ENCODE measurements at regions of chr17 and their contacts with region 1.

Region 1: DNA sequence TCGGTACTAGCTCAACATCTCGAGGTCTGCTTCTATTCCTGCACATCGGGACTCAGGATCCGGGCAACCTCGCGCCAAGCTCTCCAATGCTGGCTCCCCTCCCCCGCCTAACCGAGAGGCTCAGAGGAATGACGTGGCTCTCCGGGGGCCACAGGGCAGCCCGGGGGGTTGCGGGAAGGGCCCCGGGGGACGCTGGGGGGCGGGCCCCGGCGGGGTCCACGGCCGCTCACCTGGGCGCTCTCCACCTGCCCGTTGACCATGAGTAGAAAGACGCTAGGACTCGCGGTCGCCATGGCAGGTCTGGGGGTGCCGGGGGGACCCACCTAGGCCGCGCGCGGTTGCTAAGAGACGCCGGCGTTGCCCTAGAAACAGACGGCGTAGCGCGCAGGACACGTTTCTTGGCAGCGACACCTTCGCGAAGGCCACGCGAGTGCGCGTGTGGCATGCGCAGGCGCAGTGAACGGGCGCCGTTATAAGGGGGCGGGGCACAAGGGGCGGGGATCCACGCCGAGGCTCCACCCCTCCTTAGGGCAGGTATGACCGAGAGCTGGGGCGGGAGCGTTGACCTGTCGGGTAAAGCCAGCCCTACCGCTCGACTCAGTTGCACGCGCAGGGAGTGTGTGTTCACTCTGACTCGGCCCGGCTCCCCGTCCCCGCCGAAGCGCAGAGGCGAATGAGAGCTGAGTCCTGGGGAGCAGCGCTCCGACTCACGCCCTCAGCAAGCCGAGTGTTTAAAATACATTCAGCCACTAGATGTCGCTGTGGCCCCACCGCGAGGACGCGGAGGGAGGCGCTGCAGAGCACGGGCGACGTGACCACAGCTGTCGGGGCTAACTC is at the start of gene B9D1:
- DNase-seq: peak; percentile 83 to 93
- H3K4me3 ChIP-seq: peak within 1 kb of the TSS; percentile 86
- H3K27ac ChIP-seq: peak within 1 kb of the TSS; percentile 85
- H3K4me1 ChIP-seq: peaks cover 13% of the 10 kb centered on the region
- H3K27me3 ChIP-seq: no peaks in the 10 kb centered on the region
- CTCF ChIP-seq: peak; percentile 97
- total RNA-seq, gene B9D1: 40.2 and 58.7 TPM in 2 replicates

Region 2: DNA sequence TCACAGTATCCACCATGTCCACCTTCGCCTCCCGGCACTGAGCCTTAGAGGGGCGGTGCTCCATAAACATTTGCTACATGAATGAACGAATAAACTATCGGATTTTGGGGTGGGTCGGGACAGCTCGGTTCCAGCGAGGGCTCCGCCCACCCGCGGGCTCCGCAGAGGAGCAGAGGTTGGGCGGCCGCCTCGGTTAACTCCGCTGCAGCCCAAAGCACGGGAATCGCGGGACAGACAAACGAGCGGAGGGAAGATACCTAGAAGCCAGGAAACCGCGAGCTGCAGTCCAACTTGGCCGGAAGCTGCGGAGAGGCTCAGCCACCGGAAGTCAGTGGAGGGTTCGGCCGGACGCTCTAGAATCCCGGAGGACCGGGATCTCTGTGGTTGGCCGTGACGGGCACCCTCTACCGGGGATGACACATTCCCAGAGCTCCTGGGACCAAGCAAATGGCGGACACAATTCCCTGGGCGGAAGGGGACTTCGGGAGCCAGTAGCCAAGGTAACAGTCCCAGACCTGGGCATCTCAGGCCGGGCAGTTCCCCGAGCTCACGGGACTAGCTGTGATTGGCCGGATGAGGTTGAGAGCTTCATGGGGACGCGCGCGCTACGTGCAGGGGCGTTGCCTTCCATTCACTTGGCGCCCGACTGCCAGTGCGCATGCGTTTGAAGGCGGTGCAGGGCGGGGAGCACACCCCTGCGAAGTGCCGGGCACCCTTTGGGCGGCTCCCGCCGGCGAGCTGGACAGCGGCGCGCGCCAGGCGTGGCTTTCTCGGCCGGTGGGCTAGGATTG is 15.3 kb after region 1 on chr17:
- CTCF ChIA-PET with region 1: interaction called, 27 read pairs
- POLR2A ChIA-PET with region 1: interaction called, 19 read pairs
- intact Hi-C with region 1: no loop called
- DNase-seq: peak; percentile 97 to 100
- H3K4me3 ChIP-seq: peak overlapping the region; percentile 79
- H3K27ac ChIP-seq: peak overlapping the region; percentile 79
- H3K4me1 ChIP-seq: peaks cover 19% of the 10 kb centered on the region
- H3K27me3 ChIP-seq: no peaks in the 10 kb centered on the region
- CTCF ChIP-seq: 0 out of 2 replicates have a peak, but pooled peaks have one; percentile 21

Region 3: GRCh38 chr17:19460700-19461099 is 98.2 kb after region 1 on chr17:
- CTCF ChIA-PET with region 1: no interaction called
- POLR2A ChIA-PET with region 1: no interaction called
- intact Hi-C with region 1: no loop called
- DNase-seq: no peak
- H3K4me3 ChIP-seq: no peak overlapping the region
- H3K27ac ChIP-seq: no peak overlapping the region
- H3K4me1 ChIP-seq: no peaks in the 10 kb centered on the region
- H3K27me3 ChIP-seq: no peaks in the 10 kb centered on the region
- CTCF ChIP-seq: no peak

Region 4: DNA sequence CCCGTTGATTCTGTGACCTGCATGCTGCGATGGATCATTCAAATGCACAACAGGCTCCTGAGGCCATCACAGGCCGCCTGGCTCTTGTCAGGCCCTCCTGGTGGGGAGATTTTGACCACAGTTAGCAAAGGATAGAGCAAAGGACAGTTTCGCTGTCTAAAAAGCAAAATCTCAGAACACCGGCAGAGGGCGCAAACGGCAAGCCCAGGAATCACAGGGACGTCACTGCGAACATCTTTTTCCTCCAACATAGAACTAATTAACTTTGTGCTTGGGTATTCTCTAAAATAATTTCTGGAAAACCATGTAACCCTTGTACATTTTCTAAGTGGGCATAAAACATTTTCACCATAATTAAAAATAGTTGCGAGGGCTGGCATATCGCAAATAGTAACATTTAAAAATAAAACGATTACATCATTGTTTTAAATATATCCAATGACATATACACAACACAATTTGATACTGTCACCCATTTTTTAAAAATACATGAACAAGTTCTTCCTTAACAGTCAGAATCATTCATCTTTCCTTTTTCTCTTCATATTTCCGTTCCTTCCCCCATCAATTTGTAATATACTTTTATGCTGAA is 151.5 kb after region 1 on chr17:
- CTCF ChIA-PET with region 1: no interaction called
- POLR2A ChIA-PET with region 1: interaction called, 3 read pairs
- intact Hi-C with region 1: loop called (anchors 2 kb)
- DNase-seq: peak; percentile 58 to 75
- H3K4me3 ChIP-seq: no peak overlapping the region
- H3K27ac ChIP-seq: no peak overlapping the region
- H3K4me1 ChIP-seq: peaks cover 7% of the 10 kb centered on the region; the same call in 1 of the 2 replicates
- H3K27me3 ChIP-seq: no peaks in the 10 kb centered on the region
- CTCF ChIP-seq: peak; percentile 98

Region 5: GRCh38 chr17:19718604-19719354 is 356.3 kb after region 1 on chr17:
- CTCF ChIA-PET with region 1: no interaction called
- POLR2A ChIA-PET with region 1: no interaction called
- intact Hi-C with region 1: loop called (anchors 2 kb)
- DNase-seq: peak in 1 of 2 experiments; percentile 50
- H3K4me3 ChIP-seq: no peak overlapping the region
- H3K27ac ChIP-seq: peak overlapping the region; percentile 66
- H3K4me1 ChIP-seq: peaks cover 87% of the 10 kb centered on the region
- H3K27me3 ChIP-seq: no peaks in the 10 kb centered on the region
- CTCF ChIP-seq: peak; percentile 52

Region 6: GRCh38 chr17:19766422-19767270 is 404.2 kb after region 1 on chr17:
- CTCF ChIA-PET with region 1: interaction called, 5 read pairs
- POLR2A ChIA-PET with region 1: interaction called, 4 read pairs
- intact Hi-C with region 1: loop called (anchors 1 kb)
- DNase-seq: peak in 1 of 2 experiments; percentile 85
- H3K4me3 ChIP-seq: no peak overlapping the region
- H3K27ac ChIP-seq: no peak overlapping the region
- H3K4me1 ChIP-seq: peaks cover 9% of the 10 kb centered on the region
- H3K27me3 ChIP-seq: no peaks in the 10 kb centered on the region
- CTCF ChIP-seq: peak; percentile 98